ENCODE measurements at regions of chr13 and their contacts with region 1.

Region 1: GRCh38 chr13:43786773-43787517 is at the start of gene ENOX1:
- DNase-seq: peak; percentile 19
- ATAC-seq: peak; percentile 39
- H3K4me3 Mint-ChIP-seq: peak within 1 kb of the TSS; percentile 79
- H3K27ac Mint-ChIP-seq: no peak within 1 kb of the TSS
- H3K4me1 Mint-ChIP-seq: peaks cover 16% of the 10 kb centered on the region
- H3K27me3 Mint-ChIP-seq: peaks cover 32% of the 10 kb centered on the region
- CTCF ChIP-seq: no peak
- total RNA-seq, gene ENOX1: not detected in 2 replicates

Region 2: DNA sequence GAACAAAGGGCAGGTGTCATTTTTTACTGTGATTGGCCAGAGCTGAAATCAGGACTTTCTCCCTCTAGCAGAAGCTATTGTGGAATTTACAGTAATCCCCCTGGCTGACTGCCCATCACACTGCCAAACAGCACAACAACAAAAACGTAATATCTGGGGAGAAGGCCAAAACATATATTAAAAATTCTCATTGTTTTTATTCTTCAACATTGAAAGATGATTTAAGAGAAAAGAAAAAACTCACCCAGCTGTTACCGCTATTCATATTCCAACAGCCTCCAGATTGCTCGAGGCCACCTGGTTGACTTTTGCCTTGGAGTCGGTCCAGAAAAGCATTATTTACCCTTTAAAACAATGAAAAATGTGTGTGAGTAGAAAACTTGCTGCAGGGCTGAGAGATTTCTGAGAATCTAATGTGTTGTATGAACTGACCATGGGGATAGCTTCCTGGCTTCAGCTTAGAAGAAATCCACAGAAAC is 892.1 kb before region 1 on chr13:
- CTCF ChIA-PET with region 1: no interaction called
- POLR2A ChIA-PET with region 1: interaction called, 11 read pairs
- intact Hi-C with region 1: no loop called
- DNase-seq: no peak
- ATAC-seq: no peak
- H3K4me3 Mint-ChIP-seq: no peak overlapping the region
- H3K27ac Mint-ChIP-seq: no peak overlapping the region
- H3K4me1 Mint-ChIP-seq: no peaks in the 10 kb centered on the region
- H3K27me3 Mint-ChIP-seq: no peaks in the 10 kb centered on the region
- CTCF ChIP-seq: no peak

Region 3: GRCh38 chr13:43085545-43085944 is 701.4 kb before region 1 on chr13:
- CTCF ChIA-PET with region 1: interaction called, 3 read pairs
- POLR2A ChIA-PET with region 1: no interaction called
- intact Hi-C with region 1: loop called (anchors 5 kb)
- DNase-seq: no peak
- ATAC-seq: peak; percentile 28
- H3K4me3 Mint-ChIP-seq: no peak overlapping the region
- H3K27ac Mint-ChIP-seq: no peak overlapping the region
- H3K4me1 Mint-ChIP-seq: peaks cover 23% of the 10 kb centered on the region
- H3K27me3 Mint-ChIP-seq: no peaks in the 10 kb centered on the region
- CTCF ChIP-seq: no peak

Measured in activated B cell treated with CpG ODN at 0.5 μM for 24 hours (primary cell).